MCF 10A (cell line): ENCODE measurements at regions of chr12 and their contacts with region 1.

Region 1: GRCh38 chr12:76031537-76032073 is at the start of gene PHLDA1:
- DNase-seq: peak; percentile 98
- H3K4me3 Mint-ChIP-seq: peak within 1 kb of the TSS; percentile 89
- H3K27ac Mint-ChIP-seq: peak within 1 kb of the TSS; percentile 96
- H3K4me1 Mint-ChIP-seq: peaks cover 29% of the 10 kb centered on the region
- H3K27me3 Mint-ChIP-seq: no peaks in the 10 kb centered on the region
- CTCF ChIP-seq: peak; percentile 71
- total RNA-seq, gene PHLDA1: 183 and 203 TPM in 2 replicates

Region 2: DNA sequence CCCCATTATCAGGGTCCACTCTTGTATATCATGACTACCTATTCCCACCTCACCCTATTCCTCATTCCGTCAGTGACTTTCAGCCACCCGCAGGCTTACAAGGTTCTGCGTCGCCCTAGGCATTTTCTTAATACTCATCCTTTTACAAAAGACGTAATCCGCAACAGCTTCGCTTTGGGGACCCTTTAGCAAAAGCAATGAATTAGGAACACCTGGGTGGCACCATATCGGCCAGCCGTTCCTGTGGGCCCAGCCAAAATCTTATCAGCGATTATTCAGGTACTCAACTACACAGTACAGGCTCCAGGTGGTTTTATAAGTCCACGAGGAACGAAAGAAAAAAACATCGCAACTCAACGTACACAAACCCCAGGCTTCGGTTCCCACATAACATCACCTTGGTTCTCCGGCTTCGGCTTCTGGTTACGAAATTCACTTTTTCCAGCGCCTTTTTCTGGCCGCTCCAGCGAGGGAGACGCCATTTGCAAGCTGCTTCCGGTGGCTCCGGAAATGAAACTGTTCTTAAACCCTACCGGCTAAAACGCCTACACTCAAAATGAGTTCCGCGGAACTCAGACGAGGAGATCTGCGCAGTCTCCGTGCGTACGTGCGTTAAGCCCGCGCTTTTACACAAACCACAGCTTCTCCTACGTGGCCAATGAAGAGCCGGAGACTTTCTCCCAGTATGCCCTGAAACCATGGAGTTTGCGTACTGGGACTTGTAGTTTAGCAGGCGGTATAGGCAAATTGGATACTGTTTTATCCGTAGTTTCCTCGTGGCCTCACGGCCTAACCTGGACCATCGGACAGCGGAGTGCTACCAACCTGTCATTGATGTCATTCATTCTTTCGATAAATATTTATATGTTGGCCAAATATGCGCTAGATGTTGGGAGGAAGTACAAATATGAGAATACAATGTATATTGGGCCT is 520.2 kb before region 1 on chr12 and contains the start of gene KRR1:
- CTCF ChIA-PET with region 1: interaction called, 5 read pairs
- POLR2A ChIA-PET with region 1: interaction called, 16 read pairs
- intact Hi-C with region 1: no loop called
- DNase-seq: peak; percentile 95
- H3K4me3 Mint-ChIP-seq: peak within 1 kb of the TSS; percentile 100
- H3K27ac Mint-ChIP-seq: peak within 1 kb of the TSS; percentile 99
- H3K4me1 Mint-ChIP-seq: peaks cover 19% of the 10 kb centered on the region
- H3K27me3 Mint-ChIP-seq: no peaks in the 10 kb centered on the region
- CTCF ChIP-seq: no peak
- total RNA-seq, gene KRR1: 68.0 and 76.8 TPM in 2 replicates

Region 3: DNA sequence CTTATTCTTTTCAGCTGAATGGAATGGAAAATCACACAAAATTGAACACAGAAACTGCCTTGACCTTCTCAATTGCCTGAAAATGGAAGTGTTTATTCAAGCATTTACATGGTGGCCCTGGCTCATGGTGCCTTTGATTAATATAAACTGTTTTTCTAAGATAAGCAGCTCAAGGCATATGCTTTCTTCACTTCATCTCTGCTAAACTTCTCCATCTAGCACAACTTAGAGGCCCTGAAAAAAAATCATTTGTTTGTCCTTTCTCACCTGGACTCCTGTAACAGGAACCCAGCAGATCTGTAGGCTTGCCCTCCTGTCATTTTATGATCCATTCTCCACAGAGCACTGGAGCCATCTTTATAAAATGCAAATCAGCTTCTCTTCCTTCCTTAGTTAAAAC is 402.7 kb before region 1 on chr12:
- CTCF ChIA-PET with region 1: interaction called, 84 read pairs
- POLR2A ChIA-PET with region 1: interaction called, 66 read pairs
- intact Hi-C with region 1: no loop called
- DNase-seq: no peak
- H3K4me3 Mint-ChIP-seq: no peak overlapping the region
- H3K27ac Mint-ChIP-seq: no peak overlapping the region
- H3K4me1 Mint-ChIP-seq: peaks cover 6% of the 10 kb centered on the region
- H3K27me3 Mint-ChIP-seq: no peaks in the 10 kb centered on the region
- CTCF ChIP-seq: no peak

Region 4: DNA sequence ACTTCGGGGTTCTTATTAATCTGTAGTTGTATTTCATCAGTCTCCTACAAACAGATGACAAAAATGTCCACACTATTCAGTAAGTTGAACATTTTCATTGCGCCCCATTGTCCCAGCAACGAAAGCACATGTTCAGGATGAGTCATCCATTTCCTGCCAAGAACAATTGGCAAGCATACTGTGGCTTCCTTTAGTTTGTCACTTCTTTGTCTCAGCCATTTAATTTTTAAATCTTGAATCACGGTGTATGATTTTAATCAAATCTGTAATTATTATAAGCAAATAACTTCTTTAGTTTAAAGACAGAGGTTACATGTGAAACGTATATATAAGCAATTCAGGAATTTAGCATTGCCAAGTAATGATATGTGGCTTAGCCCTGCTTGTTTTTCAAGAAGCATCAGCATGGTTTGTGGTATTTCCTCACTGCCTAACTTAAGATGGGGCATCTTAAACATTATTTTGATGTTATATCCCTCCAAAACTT is 308.8 kb before region 1 on chr12:
- CTCF ChIA-PET with region 1: interaction called, 3 read pairs
- POLR2A ChIA-PET with region 1: interaction called, 34 read pairs
- intact Hi-C with region 1: loop called (anchors 10 kb)
- DNase-seq: peak; percentile 92
- H3K4me3 Mint-ChIP-seq: peak overlapping the region; percentile 5
- H3K27ac Mint-ChIP-seq: peak overlapping the region; percentile 94
- H3K4me1 Mint-ChIP-seq: peaks cover 49% of the 10 kb centered on the region
- H3K27me3 Mint-ChIP-seq: no peaks in the 10 kb centered on the region
- CTCF ChIP-seq: no peak

Region 5: GRCh38 chr12:75908961-75909605 is 122.5 kb before region 1 on chr12:
- CTCF ChIA-PET with region 1: no interaction called
- POLR2A ChIA-PET with region 1: interaction called, 15 read pairs
- intact Hi-C with region 1: no loop called
- DNase-seq: peak; percentile 82
- H3K4me3 Mint-ChIP-seq: peak overlapping the region; percentile 5
- H3K27ac Mint-ChIP-seq: no peak overlapping the region
- H3K4me1 Mint-ChIP-seq: peaks cover 6% of the 10 kb centered on the region
- H3K27me3 Mint-ChIP-seq: no peaks in the 10 kb centered on the region
- CTCF ChIP-seq: no peak

Region 6: DNA sequence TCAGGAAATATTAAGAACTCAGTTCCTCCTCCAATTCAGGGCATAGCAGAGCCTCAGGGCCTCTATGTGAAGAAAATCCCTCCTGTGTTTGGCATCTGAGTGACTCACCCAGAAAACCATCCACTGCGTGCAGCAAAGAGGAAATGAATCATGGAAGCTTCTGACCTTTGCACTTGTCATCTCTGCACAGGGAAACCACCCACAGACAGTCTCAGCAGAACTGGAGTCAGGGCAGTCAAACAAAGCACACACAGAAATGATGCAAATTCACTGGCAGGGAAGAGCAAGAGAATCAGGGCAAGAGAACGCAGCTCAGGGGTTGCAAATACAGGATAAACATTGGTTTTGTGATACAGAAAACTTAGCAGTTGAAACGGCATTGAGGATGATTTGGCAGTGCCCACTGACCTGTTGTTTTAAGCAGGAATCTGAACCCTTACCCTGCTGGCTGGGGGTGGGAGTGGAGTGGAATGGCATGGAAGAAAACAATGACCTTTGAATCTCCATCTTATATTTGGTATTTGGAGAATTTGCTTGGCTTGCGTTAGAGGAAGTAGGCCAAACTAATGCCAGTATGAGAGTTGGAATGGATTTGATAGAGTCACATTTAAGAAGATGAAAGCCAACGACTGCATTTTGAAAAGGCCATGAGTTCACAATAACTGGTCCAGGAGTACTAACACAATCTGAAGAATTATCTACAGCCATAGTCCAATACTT is 53.5 kb before region 1 on chr12:
- CTCF ChIA-PET with region 1: interaction called, 3 read pairs
- POLR2A ChIA-PET with region 1: interaction called, 59 read pairs
- intact Hi-C with region 1: loop called (anchors 1 kb)
- DNase-seq: peak; percentile 99
- H3K4me3 Mint-ChIP-seq: peak overlapping the region; percentile 19
- H3K27ac Mint-ChIP-seq: peak overlapping the region; percentile 81
- H3K4me1 Mint-ChIP-seq: peaks cover 32% of the 10 kb centered on the region
- H3K27me3 Mint-ChIP-seq: no peaks in the 10 kb centered on the region
- CTCF ChIP-seq: no peak

Region 7: DNA sequence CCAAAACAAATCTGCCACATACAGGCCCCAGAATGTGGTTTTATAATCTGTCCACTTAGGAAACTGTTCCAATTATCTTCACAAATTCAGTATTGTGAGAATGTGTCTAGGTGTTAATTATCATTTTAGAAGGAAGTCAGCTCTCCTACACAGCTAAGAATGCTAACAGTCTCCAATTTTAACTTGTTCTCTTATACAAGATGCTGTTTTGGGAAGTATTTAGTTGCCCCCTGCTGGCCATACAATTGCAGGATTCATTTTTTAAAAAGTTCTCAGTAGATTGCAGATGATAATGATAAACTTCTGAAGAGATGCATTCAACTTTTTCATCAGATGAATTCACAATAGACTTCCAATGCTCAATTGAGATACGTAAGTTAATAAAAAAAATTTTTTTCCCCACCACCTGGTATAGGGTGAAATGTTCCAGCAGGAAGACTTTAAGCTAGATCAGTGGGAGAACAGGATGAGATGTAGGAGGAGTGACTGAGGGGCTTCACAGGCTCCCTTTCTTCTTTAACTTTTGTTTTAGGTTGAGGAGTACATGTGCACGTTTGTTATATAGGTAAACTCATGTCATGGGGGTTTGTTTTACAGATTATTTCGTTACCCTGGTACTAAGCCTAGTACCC is 555.3 kb after region 1 on chr12:
- CTCF ChIA-PET with region 1: interaction called, 4 read pairs
- POLR2A ChIA-PET with region 1: interaction called, 26 read pairs
- intact Hi-C with region 1: loop called (anchors 10 kb)
- DNase-seq: peak; percentile 61
- H3K4me3 Mint-ChIP-seq: no peak overlapping the region
- H3K27ac Mint-ChIP-seq: peak overlapping the region; percentile 79
- H3K4me1 Mint-ChIP-seq: peaks cover 35% of the 10 kb centered on the region
- H3K27me3 Mint-ChIP-seq: no peaks in the 10 kb centered on the region
- CTCF ChIP-seq: peak; percentile 65